CD8-positive, alpha-beta T cell (primary cell): ENCODE measurements at regions of chr12 and their contacts with region 1.

Region 1: DNA sequence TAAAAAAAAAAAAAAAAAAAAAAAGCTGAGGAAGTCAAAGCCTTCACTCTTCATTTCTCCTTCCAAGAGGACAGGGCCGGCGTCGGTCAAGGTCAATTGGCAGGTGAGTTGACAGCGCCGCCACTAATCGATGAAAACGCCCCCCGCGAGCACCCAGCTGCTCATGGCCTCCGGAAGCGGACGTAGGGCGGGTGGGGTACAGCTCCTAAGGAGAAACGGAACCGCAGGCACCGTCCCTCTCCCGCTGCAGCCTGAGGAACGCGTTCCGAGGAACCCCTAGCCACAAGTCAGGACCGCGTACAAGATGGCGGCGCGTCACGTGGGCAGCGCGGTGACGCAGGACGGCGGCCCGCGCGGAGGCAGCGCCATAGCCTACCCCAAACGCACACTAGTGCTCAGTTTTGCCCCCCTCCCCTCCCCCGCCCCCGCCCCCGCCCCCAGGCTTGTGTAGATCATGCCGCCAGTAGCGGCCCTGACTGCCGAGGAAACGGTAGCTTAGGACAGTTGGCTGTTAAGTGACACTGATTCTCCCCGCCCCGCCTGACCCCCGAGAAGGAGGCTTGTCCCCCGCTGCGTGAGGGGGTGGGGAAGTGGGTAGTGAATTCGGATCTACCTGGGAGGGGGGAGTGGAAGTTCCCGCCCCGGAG is at the start of gene ATF1:
- DNase-seq: peak; percentile 80 to 96 (median 87)
- ATAC-seq: peak; percentile 67
- H3K4me3 ChIP-seq: peak within 1 kb of the TSS; percentile 95 to 96
- H3K4me3 Mint-ChIP-seq: peak within 1 kb of the TSS; percentile 84
- H3K27ac ChIP-seq: peak within 1 kb of the TSS; percentile 93 to 95
- H3K27ac Mint-ChIP-seq: peak within 1 kb of the TSS; percentile 91
- H3K4me1 ChIP-seq: peaks cover 20% of the 10 kb centered on the region
- H3K4me1 Mint-ChIP-seq: peaks cover 30% of the 10 kb centered on the region
- H3K27me3 ChIP-seq: no peaks in the 10 kb centered on the region
- H3K27me3 Mint-ChIP-seq: no peaks in the 10 kb centered on the region
- CTCF ChIP-seq: no peak
- total RNA-seq, gene ATF1: 11.3 to 16.0 TPM

Region 2: GRCh38 chr12:50400598-50401364 is 363.0 kb before region 1 on chr12 and contains the start of gene LARP4:
- CTCF ChIA-PET with region 1: interaction called, 3 read pairs
- POLR2A ChIA-PET with region 1: no interaction called
- intact Hi-C with region 1: loop called (anchors 5 kb)
- DNase-seq: peak; percentile 78 to 94 (median 89)
- ATAC-seq: peak; percentile 95
- H3K4me3 ChIP-seq: peak within 1 kb of the TSS; percentile 97 to 100
- H3K4me3 Mint-ChIP-seq: peak within 1 kb of the TSS; percentile 99
- H3K27ac ChIP-seq: peak within 1 kb of the TSS; percentile 63 to 72
- H3K27ac Mint-ChIP-seq: peak within 1 kb of the TSS; percentile 97
- H3K4me1 ChIP-seq: peaks cover 23% of the 10 kb centered on the region
- H3K4me1 Mint-ChIP-seq: peaks cover 38% of the 10 kb centered on the region
- H3K27me3 ChIP-seq: no peaks in the 10 kb centered on the region
- H3K27me3 Mint-ChIP-seq: peaks cover 5% of the 10 kb centered on the region
- CTCF ChIP-seq: no peak
- total RNA-seq, gene LARP4: 20.1 to 22.3 TPM

Region 3: DNA sequence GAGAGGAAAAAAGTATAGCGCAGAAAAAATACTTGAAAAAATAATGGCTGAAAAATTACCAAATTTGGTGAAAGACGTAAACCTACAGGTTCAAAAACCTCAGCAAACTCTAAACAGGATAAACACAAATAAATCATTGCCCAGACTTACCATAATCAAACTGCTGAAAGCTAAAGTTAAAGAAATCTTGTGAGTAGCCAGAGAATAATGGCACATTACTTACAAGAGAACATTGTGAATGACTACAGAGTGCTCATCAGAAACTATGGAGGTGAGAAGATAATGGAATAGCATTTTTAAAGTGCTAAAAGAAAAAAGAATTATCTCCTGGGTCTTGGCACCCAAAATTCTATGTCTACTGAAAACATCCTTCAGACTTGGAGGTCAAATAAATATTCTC is 36.1 kb after region 1 on chr12:
- CTCF ChIA-PET with region 1: no interaction called
- POLR2A ChIA-PET with region 1: no interaction called
- intact Hi-C with region 1: loop called (anchors 5 kb)
- DNase-seq: no peak
- ATAC-seq: no peak
- H3K4me3 ChIP-seq: no peak overlapping the region
- H3K4me3 Mint-ChIP-seq: no peak overlapping the region
- H3K27ac ChIP-seq: no peak overlapping the region
- H3K27ac Mint-ChIP-seq: no peak overlapping the region
- H3K4me1 ChIP-seq: no peaks in the 10 kb centered on the region
- H3K4me1 Mint-ChIP-seq: peaks cover 2% of the 10 kb centered on the region
- H3K27me3 ChIP-seq: no peaks in the 10 kb centered on the region
- H3K27me3 Mint-ChIP-seq: no peaks in the 10 kb centered on the region
- CTCF ChIP-seq: no peak

Region 4: GRCh38 chr12:50961708-50962107 is 197.9 kb after region 1 on chr12:
- CTCF ChIA-PET with region 1: no interaction called
- POLR2A ChIA-PET with region 1: no interaction called
- intact Hi-C with region 1: no loop called
- DNase-seq: no peak
- ATAC-seq: no peak
- H3K4me3 ChIP-seq: no peak overlapping the region
- H3K4me3 Mint-ChIP-seq: no peak overlapping the region
- H3K27ac ChIP-seq: no peak overlapping the region
- H3K27ac Mint-ChIP-seq: no peak overlapping the region
- H3K4me1 ChIP-seq: no peaks in the 10 kb centered on the region
- H3K4me1 Mint-ChIP-seq: peaks cover 8% of the 10 kb centered on the region
- H3K27me3 ChIP-seq: no peaks in the 10 kb centered on the region
- H3K27me3 Mint-ChIP-seq: no peaks in the 10 kb centered on the region
- CTCF ChIP-seq: no peak

Region 5: DNA sequence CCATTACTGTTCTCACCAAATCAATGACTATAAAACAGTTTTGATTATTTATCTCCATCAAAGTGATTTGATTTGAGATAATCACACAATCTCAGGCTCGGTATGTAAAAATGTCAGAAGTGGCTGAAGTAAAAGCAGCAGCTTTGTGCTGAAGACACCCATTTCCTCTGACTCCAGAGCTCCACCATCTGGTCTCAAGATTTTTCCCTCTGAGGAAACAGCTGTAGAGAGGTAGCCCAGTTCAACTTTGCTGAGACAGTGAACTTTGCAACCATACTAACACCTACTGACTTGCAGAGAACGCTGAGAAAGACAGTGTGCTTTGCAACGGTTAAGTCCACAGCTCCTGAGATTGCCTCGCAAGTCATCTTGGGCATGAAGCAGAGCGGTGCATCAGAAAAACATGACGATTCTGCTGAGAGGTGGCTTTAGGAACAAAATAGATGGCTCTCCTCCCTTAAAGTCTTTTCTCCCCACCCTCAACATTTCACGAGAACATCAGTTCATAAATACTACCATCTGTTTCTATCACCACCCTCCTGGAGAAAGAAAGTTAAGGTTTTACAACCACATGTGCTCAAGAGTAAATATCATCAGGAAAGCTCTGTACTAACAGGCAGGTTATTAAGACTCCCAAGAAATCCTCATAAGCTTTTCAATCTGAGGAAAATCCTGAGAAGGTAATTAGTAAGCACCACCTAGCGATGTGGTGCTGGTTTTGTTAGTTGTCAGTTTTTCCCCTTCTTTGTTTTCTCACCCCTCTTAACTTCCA is 223.4 kb after region 1 on chr12:
- CTCF ChIA-PET with region 1: interaction called, 20 read pairs
- POLR2A ChIA-PET with region 1: interaction called, 5 read pairs
- intact Hi-C with region 1: loop called (anchors 1 kb)
- DNase-seq: peak in 7 of 9 experiments; percentile 18 to 62 (median 31)
- ATAC-seq: peak; percentile 58
- H3K4me3 ChIP-seq: no peak overlapping the region
- H3K4me3 Mint-ChIP-seq: no peak overlapping the region
- H3K27ac ChIP-seq: no peak overlapping the region
- H3K27ac Mint-ChIP-seq: peak overlapping the region; percentile 23
- H3K4me1 ChIP-seq: no peaks in the 10 kb centered on the region
- H3K4me1 Mint-ChIP-seq: peaks cover 6% of the 10 kb centered on the region
- H3K27me3 ChIP-seq: no peaks in the 10 kb centered on the region
- H3K27me3 Mint-ChIP-seq: no peaks in the 10 kb centered on the region
- CTCF ChIP-seq: no peak

Region 6: DNA sequence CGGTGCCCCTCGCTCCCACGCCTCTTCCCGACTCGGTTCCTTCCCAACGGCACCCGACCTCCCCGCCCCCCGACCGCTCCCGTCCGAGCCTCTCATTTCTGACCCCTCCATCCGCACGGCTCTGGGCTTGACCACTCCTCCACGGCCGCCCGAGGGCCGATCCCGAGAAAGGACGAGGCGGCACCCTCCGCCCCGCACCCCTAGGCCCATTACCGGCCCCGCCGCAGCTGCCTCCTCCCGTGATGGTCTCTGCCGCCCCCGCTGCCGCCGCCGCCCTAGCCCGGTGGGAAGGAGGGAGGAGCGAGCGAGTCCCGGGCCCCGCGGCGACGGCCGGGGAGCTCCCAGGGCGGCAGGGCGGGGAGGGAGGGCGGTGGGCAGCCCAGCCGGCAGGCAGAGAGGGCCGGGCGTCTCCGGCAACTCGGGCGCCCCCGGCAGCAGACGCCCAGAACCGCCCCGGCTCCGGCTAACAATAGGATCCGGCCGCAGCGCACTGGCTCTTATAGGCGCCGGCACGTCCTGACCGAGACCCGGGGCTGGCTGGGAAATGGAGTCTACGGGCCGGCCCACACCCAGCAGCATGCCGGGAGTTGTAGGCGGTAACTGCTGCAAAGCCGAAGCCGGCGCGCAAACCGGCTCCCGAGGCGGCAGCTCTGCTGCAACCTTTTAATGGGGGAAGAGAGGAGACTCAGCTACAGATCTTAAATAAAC is 319.5 kb after region 1 on chr12 and contains the start of gene CSRNP2:
- CTCF ChIA-PET with region 1: no interaction called
- POLR2A ChIA-PET with region 1: interaction called, 14 read pairs
- intact Hi-C with region 1: loop called (anchors 1 to 2 kb)
- DNase-seq: peak; percentile 90 to 97 (median 94)
- ATAC-seq: peak; percentile 99
- H3K4me3 ChIP-seq: peak within 1 kb of the TSS; percentile 88
- H3K4me3 Mint-ChIP-seq: peak within 1 kb of the TSS; percentile 94
- H3K27ac ChIP-seq: peak within 1 kb of the TSS; percentile 61 to 62
- H3K27ac Mint-ChIP-seq: peak within 1 kb of the TSS; percentile 91
- H3K4me1 ChIP-seq: peaks cover 12% of the 10 kb centered on the region
- H3K4me1 Mint-ChIP-seq: peaks cover 36% of the 10 kb centered on the region
- H3K27me3 ChIP-seq: no peaks in the 10 kb centered on the region
- H3K27me3 Mint-ChIP-seq: no peaks in the 10 kb centered on the region
- CTCF ChIP-seq: no peak
- total RNA-seq, gene CSRNP2: 19.5 to 19.9 TPM

Region 7: GRCh38 chr12:51238510-51239334 is 475.0 kb after region 1 on chr12 and contains the start of gene DAZAP2:
- CTCF ChIA-PET with region 1: no interaction called
- POLR2A ChIA-PET with region 1: interaction called, 6 read pairs
- intact Hi-C with region 1: loop called in 1 of 2 experiments (anchors 5 kb)
- DNase-seq: peak; percentile 89 to 98 (median 96)
- ATAC-seq: peak; percentile 88
- H3K4me3 ChIP-seq: peak within 1 kb of the TSS; percentile 80 to 99
- H3K4me3 Mint-ChIP-seq: peak within 1 kb of the TSS; percentile 94
- H3K27ac ChIP-seq: peak within 1 kb of the TSS; percentile 97 to 100
- H3K27ac Mint-ChIP-seq: peak within 1 kb of the TSS; percentile 100
- H3K4me1 ChIP-seq: peaks cover 32% of the 10 kb centered on the region
- H3K4me1 Mint-ChIP-seq: peaks cover 45% of the 10 kb centered on the region
- H3K27me3 ChIP-seq: no peaks in the 10 kb centered on the region
- H3K27me3 Mint-ChIP-seq: no peaks in the 10 kb centered on the region
- CTCF ChIP-seq: no peak
- total RNA-seq, gene DAZAP2: 340 to 343 TPM